ENCODE measurements at regions of chr5 and their contacts with region 1.

Region 1: DNA sequence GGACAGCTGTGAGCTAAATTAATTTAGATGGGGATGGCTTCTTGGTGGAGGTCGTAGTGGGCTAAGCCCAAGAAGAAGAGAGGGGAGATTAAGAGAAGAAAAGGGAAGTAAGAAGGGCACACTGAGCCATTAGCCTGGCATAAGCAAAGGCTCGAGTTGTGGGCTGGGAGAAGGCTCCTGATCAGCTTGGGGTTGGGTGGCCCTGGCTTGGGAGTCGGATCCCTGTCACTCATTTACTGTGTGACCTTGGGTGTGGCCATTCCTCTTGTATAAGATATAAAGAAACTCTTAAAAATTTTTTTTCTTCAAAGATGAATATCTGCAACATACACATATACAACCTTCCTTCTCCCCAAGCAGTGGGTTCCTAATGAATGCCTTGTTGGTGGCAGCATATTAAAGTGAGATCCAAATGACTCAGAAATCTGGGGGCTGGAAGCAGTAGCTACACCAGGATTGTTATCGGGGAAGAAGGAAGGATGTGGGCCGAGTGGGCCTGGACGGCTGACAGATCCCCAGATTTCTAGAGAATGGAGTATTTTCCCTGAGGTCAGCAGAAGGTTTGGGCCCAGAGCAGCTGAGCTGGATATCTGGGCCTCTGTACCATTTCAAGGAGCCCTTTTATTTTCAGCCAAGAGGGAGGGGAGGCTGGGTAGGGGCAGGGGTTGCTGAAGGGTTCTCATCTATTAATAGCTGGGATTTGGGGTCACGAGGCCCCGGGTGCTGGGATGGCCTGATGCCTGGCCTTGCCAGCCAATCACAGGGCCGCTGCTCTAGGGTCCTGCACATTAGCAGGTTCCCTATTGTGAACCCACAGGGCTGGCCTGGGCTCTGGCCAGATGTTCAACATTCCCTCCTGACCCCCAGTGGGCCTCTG is 52.1 kb downstream of the PPARGC1B start:
- DNase-seq: no peak
- H3K4me3 ChIP-seq: no peak overlapping the region
- H3K27ac ChIP-seq: peak overlapping the region; percentile 25 to 94 (median 92)
- H3K4me1 ChIP-seq: peaks cover 0 to 79% (median 64%) of the 10 kb centered on the region in 4 donors
- H3K27me3 ChIP-seq: no peaks in the 10 kb centered on the region
- CTCF ChIP-seq: no peak
- EP300 ChIP-seq: no peak
- POLR2A ChIP-seq: no peak

Region 2: GRCh38 chr5:149792540-149793255 is 10.4 kb after region 1 on chr5:
- intact Hi-C with region 1: loop called (anchors 1 kb)
- DNase-seq: no peak
- H3K4me3 ChIP-seq: no peak overlapping the region
- H3K27ac ChIP-seq: peak overlapping the region; percentile 80 to 97 (median 86)
- H3K4me1 ChIP-seq: peaks cover 0 to 83% (median 72%) of the 10 kb centered on the region in 4 donors
- H3K27me3 ChIP-seq: no peaks in the 10 kb centered on the region
- CTCF ChIP-seq: no peak
- EP300 ChIP-seq: no peak
- POLR2A ChIP-seq: no peak

Region 3: GRCh38 chr5:149960272-149961185 is 178.3 kb after region 1 on chr5 and contains the start of gene SLC26A2:
- intact Hi-C with region 1: no loop called
- DNase-seq: peak; percentile 99
- H3K4me3 ChIP-seq: peak within 1 kb of the TSS; percentile 62 to 98 (median 82)
- H3K27ac ChIP-seq: peak within 1 kb of the TSS; percentile 86 to 93 (median 90)
- H3K4me1 ChIP-seq: peaks cover 0 to 19% (median 9%) of the 10 kb centered on the region in 4 donors
- H3K27me3 ChIP-seq: no peaks in the 10 kb centered on the region
- CTCF ChIP-seq: no peak
- EP300 ChIP-seq: no peak
- POLR2A ChIP-seq: peak; percentile 89 to 92
- total RNA-seq, gene SLC26A2: 6.4 to 12.1 (median 7.0) TPM